Prostate gland (tissue), 2 donors: ENCODE measurements at regions of chr2 and their contacts with region 1.

Region 1: GRCh38 chr2:209423562-209424198 is at the start of gene MAP2:
- DNase-seq: peak; percentile 80
- H3K4me3 ChIP-seq: peak within 1 kb of the TSS; percentile 49 to 57
- H3K27ac ChIP-seq: peak within 1 kb of the TSS; percentile 51 to 76
- H3K4me1 ChIP-seq: no peaks in the 10 kb centered on the region
- H3K27me3 ChIP-seq: no peaks in the 10 kb centered on the region
- CTCF ChIP-seq: peak; percentile 70 to 97 (median 88)
- POLR2A ChIP-seq: peak; percentile 32
- total RNA-seq, gene MAP2: 18.8 to 30.7 TPM

Region 2: GRCh38 chr2:209334198-209335017 is 89.3 kb before region 1 on chr2:
- intact Hi-C with region 1: loop called (anchors 5 kb)
- DNase-seq: peak; percentile 40
- H3K4me3 ChIP-seq: no peak overlapping the region
- H3K27ac ChIP-seq: no peak overlapping the region
- H3K4me1 ChIP-seq: no peaks in the 10 kb centered on the region
- H3K27me3 ChIP-seq: no peaks in the 10 kb centered on the region
- CTCF ChIP-seq: peak; percentile 57 to 77 (median 75)
- POLR2A ChIP-seq: no peak

Region 3: GRCh38 chr2:209556354-209556961 is 132.8 kb after region 1 on chr2:
- intact Hi-C with region 1: loop called (anchors 10 kb)
- DNase-seq: no peak
- H3K4me3 ChIP-seq: no peak overlapping the region
- H3K27ac ChIP-seq: no peak overlapping the region
- H3K4me1 ChIP-seq: no peaks in the 10 kb centered on the region
- H3K27me3 ChIP-seq: no peaks in the 10 kb centered on the region
- CTCF ChIP-seq: peak in 3 of 4 experiments; percentile 25 to 40 (median 31)
- POLR2A ChIP-seq: no peak